Astrocyte of the spinal cord (primary cell): ENCODE measurements at regions of chr11 and their contacts with region 1.

Region 1: DNA sequence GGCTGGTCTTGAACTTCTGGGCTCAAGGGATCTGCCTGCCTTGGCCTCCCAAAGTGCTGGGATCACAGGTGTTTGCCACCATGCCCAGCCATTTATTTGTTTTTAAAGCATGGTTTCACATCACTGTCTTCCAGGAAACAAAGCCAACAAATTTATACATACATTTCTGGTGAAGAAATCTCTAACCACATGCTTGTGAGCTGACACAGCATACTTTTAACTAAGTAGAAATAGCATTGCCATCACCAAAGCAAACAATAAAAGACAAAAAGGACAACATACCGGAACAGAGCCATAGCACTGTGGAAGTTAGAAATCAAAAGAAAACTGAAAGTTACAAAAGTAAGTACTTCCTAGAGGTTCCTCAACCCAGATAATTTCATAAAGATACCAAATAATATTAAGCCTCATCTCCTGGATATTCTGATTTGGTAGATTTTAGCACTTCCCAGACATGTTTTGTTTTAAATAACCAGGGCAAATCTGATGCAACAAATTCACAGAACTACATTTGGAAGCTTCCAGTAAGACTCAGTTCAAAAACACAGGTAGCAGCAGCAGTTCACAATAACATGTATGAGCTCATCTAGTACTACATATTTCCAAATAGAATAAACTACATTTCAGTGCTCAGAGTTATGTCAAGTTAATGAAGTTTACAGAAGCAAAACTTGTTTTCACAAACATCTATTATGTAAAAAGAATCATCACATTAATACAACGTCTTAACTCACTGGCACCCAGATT is 70.6 kb downstream of the RRAS2 start:
- DNase-seq: peak; percentile 85
- H3K4me3 ChIP-seq: no peak overlapping the region
- CTCF ChIP-seq: no peak

Region 2: DNA sequence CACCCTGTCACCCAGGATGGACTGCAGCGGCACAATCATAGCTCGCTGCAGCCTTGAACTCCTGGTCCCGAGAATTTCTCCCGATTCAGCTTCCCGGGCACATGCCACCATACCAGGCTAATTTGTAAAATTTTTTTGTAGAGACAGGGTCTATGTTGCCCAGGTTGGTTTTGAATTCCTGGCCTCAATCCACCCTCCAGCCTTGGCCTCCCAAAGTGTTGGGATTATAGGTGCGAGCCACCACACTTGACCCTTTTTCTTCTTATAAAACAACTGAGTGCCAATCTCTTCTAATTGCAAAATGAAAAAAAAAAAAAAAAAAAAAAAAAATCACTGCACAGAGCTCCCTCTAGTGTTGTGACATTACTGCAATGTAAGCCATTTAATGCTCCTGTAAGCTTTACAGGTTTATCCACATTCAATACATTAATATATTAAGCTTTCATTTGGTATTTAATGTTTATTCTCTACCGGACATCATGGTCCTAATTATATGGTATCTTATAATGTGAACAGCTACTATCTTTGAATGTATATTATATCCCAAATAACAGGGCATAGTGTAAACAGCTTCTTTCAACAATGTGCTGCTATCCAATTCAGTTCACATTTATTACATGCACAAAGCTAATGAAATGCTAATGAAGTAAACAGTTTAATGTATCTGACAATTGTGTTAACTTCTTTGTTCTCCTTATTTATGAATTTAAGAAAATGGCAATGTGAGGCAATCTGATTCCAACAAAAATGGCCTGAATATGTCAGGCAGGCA is 166.7 kb after region 1 on chr11:
- in situ Hi-C with region 1: loop called (anchors 25 kb)
- DNase-seq: peak; percentile 61
- H3K4me3 ChIP-seq: no peak overlapping the region
- CTCF ChIP-seq: peak; percentile 67